HCT116 (cell line): ENCODE measurements at regions of chr2 and their contacts with region 1.

Region 1: DNA sequence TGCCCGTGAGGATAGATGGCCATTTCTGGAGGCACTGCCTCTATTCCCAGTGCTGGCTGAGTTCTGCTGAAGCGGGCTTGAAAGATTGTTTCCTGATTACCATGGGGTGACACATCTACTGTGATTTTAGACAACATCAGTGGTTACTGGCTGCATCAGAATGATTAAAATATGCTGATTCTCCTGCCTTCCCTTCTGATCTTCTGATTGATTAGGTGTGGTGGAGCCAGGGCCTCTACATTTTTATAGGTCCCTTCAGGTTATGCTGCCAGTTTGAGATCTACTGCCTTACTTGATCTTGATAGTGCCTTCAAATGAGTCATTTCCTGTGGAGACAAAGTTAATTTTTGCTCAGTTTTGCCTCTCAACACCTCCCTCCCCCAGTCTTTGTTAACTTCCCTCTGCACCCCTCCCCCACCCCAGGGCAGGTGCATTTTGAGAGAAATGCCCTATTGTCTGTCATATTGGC is 31.6 kb upstream of the SNORC start:
- DNase-seq: no peak
- ATAC-seq: peak; percentile 74
- H3K4me3 ChIP-seq: peak overlapping the region in 1 of 2 experiments; percentile 4; a peak in 1 of 4 replicates
- H3K27ac ChIP-seq: peak overlapping the region; percentile 44; the same call in 1 of the 2 replicates
- H3K4me1 ChIP-seq: peaks cover 12 to 41% of the 10 kb centered on the region in 2 experiments
- H3K27me3 ChIP-seq: no peaks in the 10 kb centered on the region
- CTCF ChIP-seq: no peak
- POLR2A ChIP-seq: no peak
- RAD21 ChIP-seq: no peak

Region 2: GRCh38 chr2:232600053-232600773 is 238.2 kb before region 1 on chr2:
- CTCF ChIA-PET with region 1: no interaction called
- POLR2A ChIA-PET with region 1: no interaction called
- RAD21 ChIA-PET with region 1: no interaction called
- intact Hi-C with region 1: loop called (anchors 10 kb)
- DNase-seq: no peak
- ATAC-seq: no peak
- H3K4me3 ChIP-seq: no peak overlapping the region
- H3K27ac ChIP-seq: no peak overlapping the region
- H3K4me1 ChIP-seq: no peaks in the 10 kb centered on the region
- H3K27me3 ChIP-seq: no peaks in the 10 kb centered on the region
- CTCF ChIP-seq: no peak
- POLR2A ChIP-seq: no peak
- RAD21 ChIP-seq: no peak

Region 3: DNA sequence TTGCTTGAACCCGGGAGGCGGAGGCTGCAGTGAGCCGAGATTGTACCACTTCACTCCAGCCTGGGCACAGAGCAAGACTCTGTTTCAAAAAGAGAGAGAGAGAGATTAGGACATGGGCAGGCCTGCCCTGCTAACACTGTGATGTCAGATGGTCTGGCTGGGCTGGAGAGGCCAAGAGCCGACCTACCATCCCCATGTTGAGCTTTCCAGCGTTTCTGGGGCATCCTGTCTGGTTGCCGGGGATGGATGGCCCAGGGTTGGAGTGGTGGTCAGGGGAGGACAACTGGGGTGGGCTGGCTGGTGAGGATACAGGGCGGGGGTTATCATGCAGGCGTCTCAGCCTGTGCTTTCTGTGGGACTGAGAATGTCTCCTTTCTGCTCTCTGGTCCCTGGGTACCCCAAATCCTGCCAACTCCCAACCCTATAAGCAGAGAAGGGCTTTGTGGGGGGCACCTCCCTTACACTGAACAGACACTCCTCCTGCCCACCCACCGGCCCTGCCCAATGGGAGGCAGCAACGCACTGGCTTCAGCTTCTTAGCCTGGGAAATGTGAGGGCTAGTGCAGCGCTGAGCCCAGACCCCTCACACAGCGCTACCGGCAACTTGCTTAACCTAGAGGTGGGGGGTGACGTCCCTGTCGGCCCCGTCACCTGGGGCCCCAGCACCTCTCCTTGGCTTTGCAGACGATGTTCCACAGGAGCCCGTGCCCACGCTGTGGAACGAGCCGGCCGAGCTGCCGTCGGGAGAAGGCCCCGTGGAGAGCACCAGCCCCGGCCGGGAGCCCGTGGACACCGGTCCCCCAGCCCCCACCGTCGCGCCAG is 37.0 kb after region 1 on chr2:
- CTCF ChIA-PET with region 1: no interaction called
- POLR2A ChIA-PET with region 1: no interaction called
- RAD21 ChIA-PET with region 1: no interaction called
- intact Hi-C with region 1: no loop called
- DNase-seq: no peak
- ATAC-seq: no peak
- H3K4me3 ChIP-seq: no peak overlapping the region
- H3K27ac ChIP-seq: no peak overlapping the region
- H3K4me1 ChIP-seq: no peaks in the 10 kb centered on the region
- H3K27me3 ChIP-seq: no peaks in the 10 kb centered on the region
- CTCF ChIP-seq: no peak
- POLR2A ChIP-seq: no peak
- RAD21 ChIP-seq: no peak